ENCODE measurements at regions of chr10 and their contacts with region 1.

Region 1: GRCh38 chr10:122648599-122649428 is 50.8 kb downstream of the C10orf120 start:
- DNase-seq: peak; percentile 74

Region 2: DNA sequence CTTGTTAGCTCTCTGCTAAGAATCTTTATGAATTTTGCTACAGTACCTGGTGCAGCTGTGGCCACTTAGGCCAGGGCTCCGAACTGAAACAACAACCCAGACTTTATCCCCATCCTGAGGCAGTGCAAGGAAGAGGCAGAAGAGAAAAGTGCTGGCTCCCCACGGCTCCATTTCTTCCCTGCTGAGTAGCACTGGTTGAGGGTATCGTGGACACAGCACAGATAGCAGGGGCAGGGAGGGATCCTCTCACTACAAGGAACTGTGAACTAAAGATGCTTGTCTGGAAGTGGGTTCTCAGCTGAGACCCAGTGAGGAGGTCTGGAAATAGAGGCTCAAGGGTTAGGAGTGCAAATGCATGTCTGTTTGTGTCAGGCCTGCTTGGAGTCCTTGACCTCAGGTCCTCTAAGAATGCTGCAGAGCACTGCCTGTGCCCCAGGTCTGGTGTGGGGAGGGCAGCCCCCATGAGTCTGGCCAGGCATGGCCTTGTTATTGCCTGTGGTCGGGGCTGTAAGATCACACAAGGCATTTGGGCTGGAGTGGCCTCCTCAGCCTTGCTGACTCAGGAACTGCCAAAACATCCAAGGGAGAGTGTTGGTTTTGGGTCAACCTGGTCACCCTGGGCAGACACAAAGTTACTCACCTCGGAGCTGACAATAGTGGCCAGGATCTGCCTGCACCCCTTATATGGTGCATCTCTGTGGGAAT is 30.2 kb before region 1 on chr10:
- intact Hi-C with region 1: no loop called
- DNase-seq: peak; percentile 62

Region 3: GRCh38 chr10:122688293-122688994 is 39.6 kb after region 1 on chr10:
- intact Hi-C with region 1: loop called (anchors 5 kb)
- DNase-seq: no peak

Region 4: DNA sequence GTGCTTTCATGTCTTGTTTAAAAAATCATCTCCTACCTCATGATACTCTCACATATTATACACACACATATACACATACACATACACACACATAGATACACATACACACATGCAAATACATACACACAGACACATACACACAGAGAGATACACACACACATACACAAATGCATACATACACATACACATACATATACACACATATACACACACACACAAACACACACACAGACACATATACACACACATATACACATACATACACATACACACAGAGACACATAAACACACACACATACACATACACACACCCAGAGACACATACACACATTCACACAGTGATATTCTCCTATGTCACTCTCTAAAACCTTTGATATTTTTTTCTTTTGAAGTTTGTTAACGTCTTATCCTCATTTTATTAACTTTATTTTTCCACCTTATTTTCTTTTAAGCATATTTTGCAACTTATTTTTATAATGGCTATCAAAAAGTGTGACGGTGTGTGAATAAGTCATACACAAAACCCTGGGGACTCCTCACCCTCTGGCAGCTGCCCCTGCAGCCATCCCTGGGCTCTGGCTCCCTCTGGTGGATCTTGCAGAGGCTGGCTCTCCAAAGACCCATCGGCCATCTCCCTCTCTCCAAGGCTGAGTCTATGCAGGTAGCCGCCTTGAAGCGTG is 54.8 kb after region 1 on chr10:
- intact Hi-C with region 1: loop called (anchors 1 kb)
- DNase-seq: no peak

Region 5: DNA sequence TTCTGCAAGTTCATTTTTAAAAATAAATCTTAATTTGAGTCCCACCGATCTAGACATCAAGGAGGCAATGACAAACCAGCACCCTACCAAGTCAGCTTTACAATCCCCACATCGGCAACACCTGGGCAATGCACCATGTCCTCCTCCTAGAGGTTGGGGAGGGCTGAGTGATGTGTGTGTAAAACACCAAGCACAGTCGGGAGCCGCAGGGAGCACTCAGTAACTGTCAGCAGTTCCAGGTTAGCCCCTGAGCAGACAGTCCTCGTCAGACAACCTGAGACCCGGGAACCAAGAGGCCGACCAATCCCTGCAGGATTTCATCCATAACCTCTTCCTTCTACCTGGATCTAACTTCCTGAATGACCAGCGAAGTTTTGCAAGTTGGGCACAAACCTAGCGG is 66.8 kb after region 1 on chr10:
- intact Hi-C with region 1: no loop called
- DNase-seq: no peak

Measured in cardiac septum (tissue), 1 donor.